ENCODE measurements at regions of chr11 and their contacts with region 1.

Region 1: DNA sequence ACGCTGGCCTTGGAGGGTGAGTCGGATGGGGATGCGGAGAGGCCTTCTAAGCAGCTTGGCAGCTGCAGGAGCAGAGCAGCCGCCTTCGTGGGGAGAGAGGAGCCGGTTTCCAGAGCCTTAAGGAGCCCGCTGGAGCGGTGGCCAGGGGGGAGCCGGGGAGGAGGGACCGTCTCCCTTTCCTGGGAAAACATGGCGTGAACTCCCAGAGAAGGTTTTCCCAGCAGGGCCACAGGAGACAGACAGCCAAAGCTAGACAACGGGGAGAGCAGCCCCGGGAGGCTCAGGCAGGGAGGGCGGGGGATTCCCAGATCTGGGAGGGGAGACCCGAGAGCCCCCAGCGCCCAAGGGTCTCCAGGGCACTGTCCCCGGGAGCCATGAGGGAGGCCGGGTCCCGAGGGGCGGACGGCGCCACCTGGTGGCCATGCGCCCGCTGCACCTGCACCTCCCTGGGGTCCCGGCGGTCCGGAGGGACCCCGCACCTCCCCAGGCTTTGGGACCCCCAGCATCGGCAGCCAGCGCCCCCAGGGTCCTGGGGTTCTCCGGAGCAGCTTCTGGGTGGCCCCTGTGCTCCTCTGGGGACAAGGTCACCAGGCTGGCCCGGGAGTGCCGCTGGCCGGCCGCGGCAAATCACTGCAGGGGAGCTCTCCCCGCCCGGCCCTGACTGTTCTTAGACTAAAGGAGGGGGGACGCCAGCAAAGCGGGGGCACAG is 2.4 kb upstream of the SYT8 start:
- DNase-seq: peak in 2 of 3 donors; percentile 44 to 52
- H3K4me3 ChIP-seq: peak overlapping the region in 2 of 3 experiments; percentile 22 to 64
- H3K4me3 Mint-ChIP-seq: peak overlapping the region; percentile 58 to 72
- H3K27ac ChIP-seq: no peak overlapping the region
- H3K27ac Mint-ChIP-seq: no peak overlapping the region
- H3K4me1 ChIP-seq: peaks cover 8 to 14% of the 10 kb centered on the region in 2 donors
- H3K4me1 Mint-ChIP-seq: peaks cover 8% of the 10 kb centered on the region
- H3K27me3 ChIP-seq: peaks cover 0 to 47% of the 10 kb centered on the region in 2 donors
- H3K27me3 Mint-ChIP-seq: peaks cover 43 to 74% (median 43%) of the 10 kb centered on the region in 3 donors
- CTCF ChIP-seq: peak; percentile 100

Region 2: GRCh38 chr11:1744137-1744886 is 88.1 kb before region 1 on chr11:
- intact Hi-C with region 1: loop called in 1 of 2 experiments (anchors 5 kb)
- DNase-seq: no peak
- H3K4me3 ChIP-seq: no peak overlapping the region
- H3K4me3 Mint-ChIP-seq: peak overlapping the region in 1 of 2 donors; percentile 1
- H3K27ac ChIP-seq: no peak overlapping the region
- H3K27ac Mint-ChIP-seq: peak overlapping the region in 1 of 7 donors; percentile 70
- H3K4me1 ChIP-seq: peaks cover 17 to 36% of the 10 kb centered on the region in 2 donors
- H3K4me1 Mint-ChIP-seq: peaks cover 18% of the 10 kb centered on the region
- H3K27me3 ChIP-seq: peaks cover 12 to 51% of the 10 kb centered on the region in 2 donors
- H3K27me3 Mint-ChIP-seq: peaks cover 27 to 49% (median 44%) of the 10 kb centered on the region in 3 donors
- CTCF ChIP-seq: no peak

Region 3: DNA sequence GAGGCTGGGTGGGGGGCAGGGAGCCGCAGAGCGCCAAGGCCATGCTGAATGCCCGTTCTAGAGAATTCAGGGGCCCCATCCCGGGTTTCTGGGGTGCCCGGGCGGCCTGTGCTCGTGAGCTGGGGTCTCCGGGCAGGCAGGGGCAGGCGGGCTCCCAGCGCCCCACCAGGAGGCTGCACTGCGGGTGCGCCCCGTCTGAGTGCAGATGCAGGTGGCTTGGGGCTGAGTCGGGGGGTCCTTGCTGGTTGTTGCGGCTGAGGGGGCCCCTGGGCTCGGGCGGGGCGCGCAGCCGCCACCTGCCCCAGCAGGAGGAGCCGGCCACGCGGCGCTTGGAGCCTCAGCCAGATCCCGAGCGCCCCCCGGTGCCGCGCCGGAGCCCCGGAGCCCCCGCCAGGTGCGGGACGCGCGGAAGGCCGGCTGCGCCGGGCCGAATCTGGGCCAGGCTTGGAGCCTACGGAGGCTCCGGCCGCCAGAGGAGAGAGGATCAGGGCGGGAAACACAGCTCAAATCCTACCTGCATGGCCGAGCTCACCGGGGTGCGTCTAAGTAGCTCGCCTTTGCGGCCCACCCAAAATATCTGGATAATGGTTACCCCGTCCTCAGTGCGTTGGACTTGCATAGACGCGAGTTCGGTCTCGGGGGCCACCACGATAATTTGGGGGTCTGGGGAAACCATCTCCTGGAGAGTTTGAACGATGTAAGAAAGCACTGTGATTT is 307.4 kb after region 1 on chr11:
- intact Hi-C with region 1: no loop called
- DNase-seq: no peak
- H3K4me3 ChIP-seq: no peak overlapping the region
- H3K4me3 Mint-ChIP-seq: peak overlapping the region in 1 of 2 donors; percentile 71
- H3K27ac ChIP-seq: no peak overlapping the region
- H3K27ac Mint-ChIP-seq: no peak overlapping the region
- H3K4me1 ChIP-seq: no peaks in the 10 kb centered on the region
- H3K4me1 Mint-ChIP-seq: peaks cover 5% of the 10 kb centered on the region
- H3K27me3 ChIP-seq: peaks cover 40 to 84% of the 10 kb centered on the region in 2 donors
- H3K27me3 Mint-ChIP-seq: peaks cover 71 to 93% (median 79%) of the 10 kb centered on the region in 3 donors
- CTCF ChIP-seq: no peak

Measured in CD14-positive monocyte (primary cell).